Ascending aorta (tissue), 2 donors: ENCODE measurements at regions of chr17 and their contacts with region 1.

Region 1: DNA sequence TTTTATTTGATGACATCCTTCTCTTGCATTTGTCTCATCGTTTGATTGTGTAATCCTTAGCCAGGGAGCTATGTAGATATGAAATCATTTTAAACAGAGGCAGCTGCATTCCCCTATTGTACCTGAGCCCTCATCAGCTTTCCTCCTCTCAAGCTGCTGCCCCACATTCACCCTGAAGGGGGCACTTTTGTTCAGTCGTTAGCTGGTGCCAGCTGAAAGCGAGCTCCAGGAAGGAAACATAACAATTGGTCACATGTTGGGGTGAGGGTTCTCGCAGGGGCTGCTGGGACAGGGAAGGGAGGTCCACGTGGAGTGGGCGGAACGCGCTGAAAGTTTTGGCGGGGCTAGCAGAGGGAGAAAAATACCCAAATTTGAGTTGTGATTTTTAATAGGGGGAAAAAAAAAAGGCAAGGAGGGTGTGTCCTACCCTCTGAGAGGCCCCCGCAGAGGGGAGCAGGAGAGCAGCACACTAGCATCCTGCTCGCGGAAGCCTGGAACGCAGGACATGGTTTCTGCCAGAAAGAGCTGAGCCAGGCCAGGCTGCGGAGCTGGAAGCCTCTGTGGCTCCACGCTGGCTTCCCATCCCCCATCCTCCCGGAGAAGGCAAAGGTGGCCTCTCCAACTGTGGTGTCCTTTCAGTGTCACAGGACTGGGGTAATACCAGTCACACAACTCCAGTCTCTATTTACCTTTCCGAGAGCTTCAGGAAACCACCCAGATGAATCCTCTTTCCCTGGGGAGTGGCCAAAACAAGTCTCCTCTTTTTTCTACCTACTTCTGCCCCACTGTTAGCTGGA is 8.5 kb upstream of the MSL1 start:
- DNase-seq: peak; percentile 86 to 96
- H3K4me3 ChIP-seq: peak overlapping the region; percentile 47 to 57
- H3K27ac ChIP-seq: peak overlapping the region; percentile 90 to 97
- H3K4me1 ChIP-seq: peaks cover 37 to 53% of the 10 kb centered on the region in 2 donors
- H3K27me3 ChIP-seq: no peaks in the 10 kb centered on the region
- CTCF ChIP-seq: peak; percentile 82 to 96 (median 84)

Region 2: DNA sequence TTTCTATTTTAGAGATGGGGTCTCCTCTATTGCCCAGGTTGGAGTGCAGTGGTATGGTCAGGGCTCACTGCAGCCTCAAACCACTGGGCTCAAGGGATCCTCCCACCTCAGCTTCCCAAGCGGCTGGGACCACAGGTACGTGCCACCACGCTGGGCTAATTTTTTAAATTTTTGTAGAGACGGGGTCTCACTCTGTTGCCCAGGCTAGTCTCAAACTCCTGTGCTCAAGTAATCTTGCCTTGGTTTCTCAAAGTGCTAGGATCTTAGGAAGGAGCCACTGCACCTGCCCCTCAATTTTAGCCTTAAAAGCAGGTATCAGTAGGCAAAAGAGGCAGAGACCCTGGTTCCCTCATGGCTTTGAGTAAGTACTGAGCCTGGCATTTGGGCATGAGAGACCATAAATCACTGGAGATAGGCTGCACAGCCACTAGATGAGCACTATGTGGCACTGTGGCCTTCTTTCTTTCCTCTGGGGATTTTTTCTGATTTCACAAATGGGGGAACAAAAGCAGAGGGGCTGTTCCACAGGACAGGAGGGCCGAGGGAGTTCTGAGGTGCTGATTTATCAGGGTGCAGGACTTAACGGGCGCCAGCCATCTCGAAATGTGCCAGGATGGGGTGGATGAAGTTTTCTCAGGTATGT is 1044.1 kb before region 1 on chr17:
- intact Hi-C with region 1: no loop called
- DNase-seq: no peak
- H3K4me3 ChIP-seq: no peak overlapping the region
- H3K27ac ChIP-seq: no peak overlapping the region
- H3K4me1 ChIP-seq: peaks cover 0 to 2% of the 10 kb centered on the region in 2 donors
- H3K27me3 ChIP-seq: no peaks in the 10 kb centered on the region
- CTCF ChIP-seq: peak; percentile 33 to 51 (median 42)

Region 3: DNA sequence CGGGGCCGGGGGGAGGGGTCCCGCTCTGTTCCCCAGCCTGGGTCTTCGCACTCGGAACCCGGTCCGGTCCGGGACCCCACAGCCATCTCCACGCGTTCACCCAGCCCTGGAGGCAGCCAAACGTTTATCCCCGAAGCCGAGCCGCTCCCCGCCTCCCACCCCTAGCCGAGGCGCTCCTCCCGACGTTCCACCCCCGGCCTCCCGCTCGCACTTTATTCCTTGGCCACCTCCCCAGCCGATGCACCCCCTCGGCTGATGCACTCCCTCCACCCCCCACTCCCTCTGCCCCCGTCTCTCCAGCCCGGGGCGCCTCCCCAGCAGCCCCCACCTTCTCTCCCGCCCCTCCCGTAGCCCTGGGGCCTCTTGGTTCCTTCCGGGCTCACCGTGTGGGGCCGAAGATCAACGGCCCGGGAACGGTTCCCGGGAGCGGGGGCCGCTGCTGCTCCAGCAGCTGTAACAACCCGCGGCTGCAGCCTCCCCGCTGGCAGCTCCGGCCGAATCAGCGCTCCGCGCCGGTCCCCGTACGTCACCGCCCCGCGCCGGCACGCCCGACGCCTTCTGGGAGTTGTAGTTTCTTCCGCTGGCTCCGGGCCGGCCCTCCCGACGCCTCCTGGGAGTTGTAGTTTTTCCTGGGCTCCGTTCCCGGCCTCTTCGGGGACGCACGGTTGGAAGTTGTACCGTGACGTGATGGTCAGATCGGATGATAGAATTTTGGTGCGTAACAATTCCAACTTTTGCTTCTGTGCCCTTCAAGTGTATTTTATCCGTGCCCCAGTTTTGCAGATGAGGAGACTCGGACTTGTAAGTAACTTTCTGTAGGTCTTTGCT is 186.0 kb before region 1 on chr17 and contains the starts of genes LRRC3C and ORMDL3:
- intact Hi-C with region 1: loop called (anchors 1 kb)
- DNase-seq: peak; percentile 67 to 95
- H3K4me3 ChIP-seq: peak within 1 kb of the TSS; percentile 95 to 100
- H3K27ac ChIP-seq: peak within 1 kb of the TSS; percentile 98 to 99
- H3K4me1 ChIP-seq: peaks cover 14 to 32% of the 10 kb centered on the region in 2 donors
- H3K27me3 ChIP-seq: no peaks in the 10 kb centered on the region
- CTCF ChIP-seq: no peak
- total RNA-seq, gene LRRC3C: not detected
- total RNA-seq, gene ORMDL3: 32.2 TPM

Region 4: GRCh38 chr17:40075201-40075941 is 37.9 kb before region 1 on chr17:
- intact Hi-C with region 1: loop called (anchors 2 kb)
- DNase-seq: peak; percentile 73 to 94
- H3K4me3 ChIP-seq: peak overlapping the region; percentile 23 to 54
- H3K27ac ChIP-seq: peak overlapping the region; percentile 91
- H3K4me1 ChIP-seq: peaks cover 45 to 69% of the 10 kb centered on the region in 2 donors
- H3K27me3 ChIP-seq: no peaks in the 10 kb centered on the region
- CTCF ChIP-seq: peak; percentile 81 to 95 (median 94)

Region 5: GRCh38 chr17:40098846-40099618 is 14.3 kb before region 1 on chr17:
- intact Hi-C with region 1: loop called (anchors 1 kb)
- DNase-seq: peak; percentile 99 to 100
- H3K4me3 ChIP-seq: peak overlapping the region; percentile 89 to 94
- H3K27ac ChIP-seq: peak overlapping the region; percentile 91 to 99
- H3K4me1 ChIP-seq: peaks cover 35 to 70% of the 10 kb centered on the region in 2 donors
- H3K27me3 ChIP-seq: no peaks in the 10 kb centered on the region
- CTCF ChIP-seq: no peak

Region 6: DNA sequence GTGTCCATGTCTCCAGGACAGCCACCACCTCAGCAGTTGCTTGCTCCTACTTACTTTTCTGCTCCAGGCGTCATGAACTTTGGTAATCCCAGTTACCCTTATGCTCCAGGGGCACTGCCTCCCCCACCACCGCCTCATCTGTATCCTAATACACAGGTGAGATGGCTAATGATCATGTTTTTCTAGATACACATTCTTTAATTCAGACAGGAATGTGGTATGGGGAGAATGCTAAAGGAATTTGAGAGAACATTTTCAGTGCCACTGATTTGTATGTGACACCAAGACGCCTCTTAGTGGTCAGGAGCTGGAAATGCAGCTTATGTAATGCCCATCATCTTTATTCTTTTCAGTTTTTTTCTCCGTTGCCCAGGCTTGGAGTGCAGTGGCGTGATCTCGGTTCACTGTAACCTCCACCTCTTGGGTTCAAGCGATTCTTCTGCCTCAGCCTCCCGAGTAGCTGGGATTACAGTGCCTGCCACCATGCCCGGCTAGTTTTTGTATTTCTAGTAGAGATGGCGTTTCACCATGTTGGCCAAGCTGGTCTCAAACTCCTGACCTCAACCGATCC is 55.0 kb after region 1 on chr17:
- intact Hi-C with region 1: loop called (anchors 1 kb)
- DNase-seq: no peak
- H3K4me3 ChIP-seq: no peak overlapping the region
- H3K27ac ChIP-seq: peak overlapping the region in 1 of 2 donors; percentile 56
- H3K4me1 ChIP-seq: no peaks in the 10 kb centered on the region
- H3K27me3 ChIP-seq: no peaks in the 10 kb centered on the region
- CTCF ChIP-seq: peak; percentile 73 to 87 (median 83)